Body of pancreas (tissue), 4 donors: ENCODE measurements at regions of chr4 and their contacts with region 1.

Region 1: DNA sequence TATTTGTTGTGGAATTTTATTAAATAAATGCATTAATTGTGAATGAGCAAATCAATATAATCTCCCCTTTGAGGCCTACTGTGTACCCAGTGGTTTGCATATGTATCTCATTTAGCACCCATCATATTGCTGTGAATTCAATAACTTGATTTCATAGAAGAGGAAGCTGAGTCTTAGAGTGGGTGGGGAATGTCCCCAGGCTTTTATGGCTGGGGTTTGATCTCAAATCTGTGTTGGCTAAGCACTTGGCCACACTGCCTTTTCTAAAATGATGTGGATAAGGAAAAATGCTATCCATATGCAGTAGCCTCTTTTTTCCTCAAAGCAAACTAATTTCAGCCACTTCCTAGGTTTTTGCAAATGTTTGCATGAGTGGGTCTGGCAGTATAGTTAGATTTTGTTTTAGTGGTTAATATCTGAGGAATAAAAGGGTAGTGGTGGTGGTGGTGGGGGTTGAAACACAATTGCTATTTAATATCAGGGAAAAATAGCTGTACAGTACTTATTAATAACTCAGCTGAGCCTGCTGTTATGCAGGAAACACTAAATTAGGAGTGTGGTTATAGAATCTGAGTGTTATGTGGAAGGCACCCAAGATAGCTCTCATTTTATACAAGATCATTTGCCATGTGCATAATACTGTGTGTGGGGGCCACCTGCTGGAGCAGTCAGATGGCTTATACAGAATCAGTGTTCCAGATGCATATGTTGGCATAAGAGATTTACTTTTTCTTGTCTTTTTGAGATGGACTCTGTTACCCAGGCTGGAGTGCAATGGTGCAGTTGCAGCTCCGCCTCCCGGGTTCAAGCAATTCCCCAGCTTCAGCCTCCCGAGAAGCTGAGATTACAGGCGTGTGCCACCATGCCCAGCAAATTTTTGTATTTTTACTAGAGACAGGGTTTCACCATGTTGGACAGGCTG is 108.0 kb downstream of the TMEM131L start:
- DNase-seq: peak; percentile 72 to 87 (median 78)
- ATAC-seq: peak; percentile 87
- H3K4me3 ChIP-seq: no peak overlapping the region
- H3K27ac ChIP-seq: peak overlapping the region in 3 of 4 donors; percentile 16 to 49 (median 21)
- H3K4me1 ChIP-seq: peaks cover 38% of the 10 kb centered on the region
- H3K27me3 ChIP-seq: no peaks in the 10 kb centered on the region
- CTCF ChIP-seq: peak; percentile 34 to 83 (median 78)
- POLR2A ChIP-seq: no peak

Region 2: GRCh38 chr4:153344131-153345010 is 229.8 kb before region 1 on chr4 and contains the start of gene MND1:
- intact Hi-C with region 1: loop called (anchors 10 kb)
- DNase-seq: peak; percentile 78 to 86 (median 82)
- ATAC-seq: peak; percentile 90
- H3K4me3 ChIP-seq: peak within 1 kb of the TSS; percentile 39 to 73
- H3K27ac ChIP-seq: no peak within 1 kb of the TSS
- H3K4me1 ChIP-seq: peaks cover 22% of the 10 kb centered on the region
- H3K27me3 ChIP-seq: peaks cover 0 to 3% of the 10 kb centered on the region in 2 donors
- CTCF ChIP-seq: peak; percentile 70 to 98 (median 87)
- POLR2A ChIP-seq: no peak
- total RNA-seq, gene MND1: 1.0 TPM in 1 of 2 donors, not detected in the other

Region 3: GRCh38 chr4:153402366-153402765 is 171.8 kb before region 1 on chr4:
- intact Hi-C with region 1: no loop called
- DNase-seq: no peak
- ATAC-seq: no peak
- H3K4me3 ChIP-seq: no peak overlapping the region
- H3K27ac ChIP-seq: no peak overlapping the region
- H3K4me1 ChIP-seq: no peaks in the 10 kb centered on the region
- H3K27me3 ChIP-seq: no peaks in the 10 kb centered on the region
- CTCF ChIP-seq: no peak
- POLR2A ChIP-seq: no peak

Region 4: DNA sequence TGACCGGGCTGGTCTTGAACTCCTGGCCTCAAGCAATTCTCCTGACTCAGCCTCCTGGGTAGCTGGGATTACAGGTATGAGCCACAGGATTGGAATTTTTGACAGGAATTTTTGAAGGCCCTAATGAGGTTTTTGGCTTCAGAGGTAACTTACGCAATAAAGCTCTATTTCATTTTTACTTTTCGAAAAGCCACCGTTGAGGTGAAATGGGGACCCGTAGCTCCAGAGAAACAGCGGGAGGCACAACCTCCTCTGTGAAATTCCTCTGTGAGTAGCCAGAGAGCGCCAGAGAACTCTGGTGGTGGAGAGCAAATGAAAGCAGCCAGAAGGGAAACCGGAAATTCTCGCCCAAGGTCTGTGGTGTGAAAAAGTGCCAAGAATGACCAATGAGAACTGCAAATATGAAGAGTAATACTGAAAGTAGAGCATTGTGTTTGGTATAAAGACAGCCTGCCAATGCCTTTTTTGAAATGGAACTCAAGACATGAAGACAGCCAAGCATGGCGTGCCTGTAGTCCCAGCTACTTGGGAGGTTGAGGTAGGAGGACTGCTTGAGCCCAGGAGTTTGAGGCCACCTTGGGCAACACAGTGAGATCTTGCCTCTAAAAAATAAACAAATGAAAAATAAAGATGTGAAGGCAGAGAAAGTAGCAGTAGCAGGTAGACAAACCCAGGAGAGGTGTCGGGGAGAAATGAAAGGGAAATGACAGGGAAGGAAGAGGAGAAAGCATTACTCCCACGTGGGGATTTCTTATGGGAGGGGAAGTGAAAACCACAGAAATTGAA is 141.0 kb before region 1 on chr4:
- intact Hi-C with region 1: loop called (anchors 10 kb)
- DNase-seq: peak; percentile 87 to 94 (median 90)
- ATAC-seq: peak; percentile 97
- H3K4me3 ChIP-seq: no peak overlapping the region
- H3K27ac ChIP-seq: peak overlapping the region; percentile 33 to 83 (median 76)
- H3K4me1 ChIP-seq: peaks cover 10% of the 10 kb centered on the region
- H3K27me3 ChIP-seq: no peaks in the 10 kb centered on the region
- CTCF ChIP-seq: peak; percentile 69 to 97 (median 96)
- POLR2A ChIP-seq: peak in 1 of 3 donors; percentile 24

Region 5: DNA sequence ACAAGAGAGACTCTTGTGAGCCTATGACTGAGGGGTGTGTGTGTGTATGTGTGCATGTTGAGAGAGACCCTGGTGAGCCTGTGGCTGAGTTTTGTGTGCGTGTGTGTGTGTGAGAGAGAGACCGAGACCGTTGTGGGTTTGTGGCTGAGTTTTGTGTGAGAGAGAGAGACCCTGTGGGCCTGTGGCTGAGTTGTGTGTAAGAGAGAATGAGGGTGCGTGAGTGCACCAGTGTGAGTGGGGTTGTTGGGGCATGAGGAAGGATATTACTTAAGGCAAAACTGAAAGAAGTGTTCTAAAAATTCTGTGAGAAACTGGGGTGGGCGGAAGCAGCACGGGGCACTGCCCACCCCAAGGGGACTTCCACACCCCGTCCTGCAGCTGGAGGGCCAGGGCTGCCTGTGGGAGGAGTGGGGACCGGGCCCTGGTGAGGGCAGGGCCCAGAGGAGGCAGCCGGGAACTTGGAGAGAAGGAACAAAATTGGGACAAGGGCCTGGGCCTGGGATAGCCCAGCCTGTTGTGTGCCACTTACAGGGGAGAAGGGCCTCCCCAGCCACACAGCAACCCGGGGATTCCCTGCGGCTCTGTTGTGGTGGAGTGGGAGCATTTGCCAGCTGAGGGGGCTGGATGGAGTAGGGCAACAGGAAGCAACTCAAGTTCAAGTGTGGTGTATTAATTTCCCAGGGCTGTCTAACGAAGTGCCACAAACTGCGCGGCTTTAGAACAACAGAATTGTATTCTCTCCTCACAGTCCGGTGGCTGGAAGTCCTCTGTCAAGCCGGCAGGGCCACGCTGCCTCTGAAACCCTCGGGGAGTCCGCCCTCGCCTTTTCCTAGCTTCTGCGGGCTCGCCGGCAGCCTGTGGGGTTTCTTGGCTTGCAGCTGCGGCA is 85.9 kb before region 1 on chr4:
- intact Hi-C with region 1: loop called (anchors 10 kb)
- DNase-seq: no peak
- ATAC-seq: no peak
- H3K4me3 ChIP-seq: no peak overlapping the region
- H3K27ac ChIP-seq: peak overlapping the region; percentile 38 to 86 (median 62)
- H3K4me1 ChIP-seq: peaks cover 75% of the 10 kb centered on the region
- H3K27me3 ChIP-seq: no peaks in the 10 kb centered on the region
- CTCF ChIP-seq: no peak
- POLR2A ChIP-seq: no peak

Region 6: GRCh38 chr4:154435895-154436294 is 861.8 kb after region 1 on chr4:
- intact Hi-C with region 1: no loop called
- DNase-seq: no peak
- ATAC-seq: no peak
- H3K4me3 ChIP-seq: no peak overlapping the region
- H3K27ac ChIP-seq: no peak overlapping the region
- H3K4me1 ChIP-seq: no peaks in the 10 kb centered on the region
- H3K27me3 ChIP-seq: no peaks in the 10 kb centered on the region
- CTCF ChIP-seq: no peak
- POLR2A ChIP-seq: no peak